Activated T-helper 2 cell treated with anti-CD3 and anti-CD28 coated beads, Interferon-gamma antibody, Interleukin-2, Interleukin-4, amounts not matched to agents 10 μg/mL and 5 μg/mL and 100 μg/mL, durations not matched to agents 14 hours and 24 hours and 36 hours (primary cell): ENCODE measurements at regions of chr9 and their contacts with region 1.

Region 1: DNA sequence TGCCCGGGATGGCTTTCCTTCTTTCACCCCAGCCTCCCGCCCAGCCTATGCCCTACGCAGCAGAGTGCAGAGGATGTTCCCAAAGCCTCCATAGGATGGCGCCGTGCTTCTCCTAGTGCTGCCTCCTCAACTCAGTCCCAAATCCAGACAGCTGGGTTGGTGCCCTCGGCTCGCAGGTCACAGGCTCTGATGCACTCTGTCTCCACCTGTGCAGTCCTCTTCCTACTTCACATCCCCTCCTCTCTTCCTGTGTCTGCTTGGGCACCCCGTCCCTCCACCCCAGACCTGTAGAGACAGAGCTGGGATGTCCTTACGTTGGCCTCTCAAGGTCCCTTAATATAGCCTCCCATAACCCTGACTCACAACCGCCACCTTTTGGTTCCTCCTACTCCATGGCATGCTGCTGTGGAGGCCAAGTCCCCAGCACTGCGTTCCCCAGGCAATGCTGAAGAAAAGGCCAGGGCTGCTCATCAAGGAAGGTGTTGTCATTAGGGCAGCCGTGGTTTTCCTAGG is 314.4 kb downstream of the GADD45G start:
- DNase-seq: peak; percentile 31
- H3K4me3 Mint-ChIP-seq: peak overlapping the region; percentile 46
- H3K27ac Mint-ChIP-seq: peak overlapping the region; percentile 68
- H3K4me1 Mint-ChIP-seq: peaks cover 54% of the 10 kb centered on the region
- H3K27me3 Mint-ChIP-seq: peaks cover 1% of the 10 kb centered on the region

Region 2: GRCh38 chr9:89738137-89738932 is 180.9 kb before region 1 on chr9:
- intact Hi-C with region 1: loop called (anchors 1 kb)
- DNase-seq: no peak
- H3K4me3 Mint-ChIP-seq: no peak overlapping the region
- H3K27ac Mint-ChIP-seq: peak overlapping the region; percentile 90
- H3K4me1 Mint-ChIP-seq: peaks cover 64% of the 10 kb centered on the region
- H3K27me3 Mint-ChIP-seq: no peaks in the 10 kb centered on the region

Region 3: DNA sequence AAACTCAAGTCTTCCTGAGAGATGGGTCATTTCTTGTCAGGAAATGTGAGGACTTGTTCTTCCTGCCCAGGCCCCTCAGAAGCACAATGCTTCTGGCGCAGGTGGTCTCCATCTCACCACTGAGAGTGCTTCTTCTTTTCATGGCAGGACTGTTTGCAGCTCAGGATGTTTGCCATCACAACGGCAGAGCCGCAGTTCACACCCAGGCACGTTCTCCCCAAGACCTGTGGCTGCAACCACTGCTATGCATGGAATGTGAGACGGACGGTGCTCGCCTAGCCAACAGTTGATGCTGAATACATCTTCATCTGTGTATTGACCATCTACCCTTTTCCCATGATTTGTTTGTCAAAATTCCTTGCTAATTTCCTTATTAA is 98.1 kb before region 1 on chr9:
- intact Hi-C with region 1: loop called (anchors 5 kb)
- DNase-seq: no peak
- H3K4me3 Mint-ChIP-seq: no peak overlapping the region
- H3K27ac Mint-ChIP-seq: no peak overlapping the region
- H3K4me1 Mint-ChIP-seq: peaks cover 11% of the 10 kb centered on the region
- H3K27me3 Mint-ChIP-seq: peaks cover 7% of the 10 kb centered on the region

Region 4: GRCh38 chr9:89952401-89952800 is 33.2 kb after region 1 on chr9:
- intact Hi-C with region 1: loop called (anchors 1 kb)
- DNase-seq: no peak
- H3K4me3 Mint-ChIP-seq: no peak overlapping the region
- H3K27ac Mint-ChIP-seq: peak overlapping the region; percentile 47
- H3K4me1 Mint-ChIP-seq: peaks cover 27% of the 10 kb centered on the region
- H3K27me3 Mint-ChIP-seq: no peaks in the 10 kb centered on the region